ENCODE measurements at regions of chr7 and their contacts with region 1.

Region 1: DNA sequence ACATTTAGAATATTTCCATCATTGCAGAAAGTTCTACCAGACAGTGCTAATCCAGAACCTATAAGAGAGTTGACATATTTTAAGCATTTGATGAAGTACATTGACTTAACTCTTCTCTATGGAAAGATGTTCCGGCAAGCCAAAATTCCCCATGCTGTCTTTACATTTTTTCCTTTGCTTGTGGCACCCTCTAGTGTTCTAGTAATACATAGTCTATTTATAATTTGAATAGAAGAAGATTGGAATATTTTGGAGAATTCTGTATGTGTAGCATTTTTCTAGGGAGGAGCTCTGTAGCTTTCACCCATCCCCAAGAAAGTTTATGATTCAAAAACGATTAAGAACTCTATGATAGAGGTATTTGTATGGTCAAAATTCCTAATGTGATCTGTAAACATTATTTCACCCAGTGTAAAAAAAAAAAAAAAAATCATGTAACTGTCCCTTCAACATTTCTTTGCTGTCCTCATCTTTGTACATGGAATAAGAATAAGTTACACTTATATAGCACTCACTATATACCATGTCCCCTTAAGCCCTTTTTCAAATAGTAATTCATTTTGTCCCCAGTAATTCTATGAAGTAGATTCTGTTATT is 33.2 kb downstream of the NRF1 start:
- DNase-seq: no peak
- ATAC-seq: no peak
- H3K4me3 ChIP-seq: no peak overlapping the region
- H3K27ac ChIP-seq: no peak overlapping the region
- H3K4me1 ChIP-seq: peaks cover 5% of the 10 kb centered on the region; the same call in 1 of the 2 replicates
- H3K27me3 ChIP-seq: no peaks in the 10 kb centered on the region
- CTCF ChIP-seq: peak; percentile 7 to 42 (median 28); a peak in 3 of 6 replicates
- EP300 ChIP-seq: no peak
- POLR2A ChIP-seq: no peak
- RAD21 ChIP-seq: peak; percentile 49

Region 2: DNA sequence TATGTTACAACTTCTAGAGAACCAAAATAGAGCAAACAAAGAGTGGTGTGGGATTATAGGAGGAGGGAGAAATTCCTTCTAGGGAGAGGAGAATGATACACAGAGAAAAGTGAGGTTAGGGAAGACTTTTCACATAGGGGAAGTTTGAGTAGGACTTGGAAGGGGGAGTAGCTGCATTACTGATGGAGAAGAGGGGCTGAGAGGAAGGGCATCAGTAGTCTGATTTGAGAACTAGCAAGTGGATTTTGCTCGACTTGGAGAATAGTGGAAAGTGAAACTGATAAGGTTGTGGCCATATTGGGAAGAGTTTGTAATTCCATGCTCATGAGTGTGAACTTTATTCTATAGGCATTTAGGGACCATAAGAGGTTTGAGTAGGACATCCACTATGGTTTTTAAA is 27.1 kb before region 1 on chr7:
- CTCF ChIA-PET with region 1: interaction called, 19 read pairs
- POLR2A ChIA-PET with region 1: interaction called, 6 read pairs
- RAD21 ChIA-PET with region 1: interaction called, 25 read pairs
- SMC1A ChIA-PET with region 1: interaction called, 31 read pairs
- in situ Hi-C with region 1: no loop called
- intact Hi-C with region 1: no loop called
- DNase-seq: no peak
- ATAC-seq: no peak
- H3K4me3 ChIP-seq: no peak overlapping the region; the same call in 1 of the 2 replicates
- H3K27ac ChIP-seq: 0 out of 2 replicates have a peak overlapping the region, but pooled peaks have one; percentile 31
- H3K4me1 ChIP-seq: peaks cover 20% of the 10 kb centered on the region; the same call in 1 of the 2 replicates
- H3K27me3 ChIP-seq: no peaks in the 10 kb centered on the region
- CTCF ChIP-seq: no peak
- EP300 ChIP-seq: no peak
- POLR2A ChIP-seq: no peak
- RAD21 ChIP-seq: no peak

Region 3: DNA sequence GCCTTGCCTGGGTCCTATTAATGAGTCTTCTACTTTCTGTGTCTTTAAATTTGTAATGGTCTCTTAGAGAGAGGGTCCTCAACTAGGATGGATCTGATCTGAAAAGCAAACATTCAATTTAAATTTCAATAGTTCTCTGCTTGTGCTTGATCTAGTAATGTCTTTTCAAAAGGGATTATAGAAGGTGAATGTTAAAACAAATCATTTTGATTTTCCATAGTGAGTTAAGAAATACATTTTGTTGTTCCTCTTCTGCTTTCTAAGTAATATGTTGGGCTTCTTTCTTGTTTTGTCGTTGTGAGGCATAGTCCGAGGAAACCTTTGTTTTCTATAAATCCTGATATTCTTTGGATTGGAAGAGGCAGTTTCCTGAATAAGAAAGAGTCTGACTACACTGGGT is 14.4 kb before region 1 on chr7:
- CTCF ChIA-PET with region 1: interaction called, 7 read pairs
- POLR2A ChIA-PET with region 1: interaction called, 7 read pairs
- RAD21 ChIA-PET with region 1: interaction called, 5 read pairs
- SMC1A ChIA-PET with region 1: interaction called, 13 read pairs
- in situ Hi-C with region 1: no loop called
- intact Hi-C with region 1: no loop called
- DNase-seq: no peak
- ATAC-seq: no peak
- H3K4me3 ChIP-seq: no peak overlapping the region
- H3K27ac ChIP-seq: no peak overlapping the region
- H3K4me1 ChIP-seq: peaks cover 6% of the 10 kb centered on the region; the same call in 1 of the 2 replicates
- H3K27me3 ChIP-seq: no peaks in the 10 kb centered on the region
- CTCF ChIP-seq: no peak
- EP300 ChIP-seq: no peak
- POLR2A ChIP-seq: no peak
- RAD21 ChIP-seq: no peak

Region 4: DNA sequence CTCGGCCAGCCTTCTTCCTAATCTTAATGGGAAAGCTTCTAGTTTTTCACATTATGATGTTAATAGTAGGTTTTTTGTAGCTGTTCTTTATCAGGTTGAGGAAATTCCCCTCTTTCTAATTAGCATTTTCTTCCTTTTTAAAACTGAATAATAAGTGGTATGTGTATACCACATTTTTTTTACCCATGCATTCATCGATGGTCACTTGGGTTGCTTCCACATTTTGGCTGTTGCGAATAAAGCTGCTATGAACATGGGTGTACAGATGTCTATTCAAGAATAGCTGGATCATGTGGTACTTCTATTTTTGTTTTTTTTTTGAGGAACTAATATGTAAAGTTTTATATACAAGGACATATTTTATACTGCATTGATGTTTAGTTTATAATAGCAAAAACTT is 11.1 kb after region 1 on chr7:
- CTCF ChIA-PET with region 1: interaction called, 5 read pairs
- POLR2A ChIA-PET with region 1: interaction called, 3 read pairs
- RAD21 ChIA-PET with region 1: interaction called, 10 read pairs
- SMC1A ChIA-PET with region 1: interaction called, 3 read pairs
- in situ Hi-C with region 1: no loop called
- intact Hi-C with region 1: no loop called
- DNase-seq: peak; percentile 35
- ATAC-seq: peak; percentile 88
- H3K4me3 ChIP-seq: no peak overlapping the region
- H3K27ac ChIP-seq: no peak overlapping the region
- H3K4me1 ChIP-seq: peaks cover 12% of the 10 kb centered on the region
- H3K27me3 ChIP-seq: no peaks in the 10 kb centered on the region
- CTCF ChIP-seq: no peak
- EP300 ChIP-seq: no peak
- POLR2A ChIP-seq: no peak
- RAD21 ChIP-seq: no peak